ENCODE measurements at regions of chr15 and their contacts with region 1.

Region 1: GRCh38 chr15:83248151-83249029 is 36.1 kb downstream of the BNC1 start:
- DNase-seq: peak; percentile 20
- ATAC-seq: peak; percentile 85
- H3K4me3 Mint-ChIP-seq: no peak overlapping the region
- H3K27ac Mint-ChIP-seq: no peak overlapping the region
- H3K4me1 Mint-ChIP-seq: peaks cover 4% of the 10 kb centered on the region
- H3K27me3 Mint-ChIP-seq: peaks cover 16% of the 10 kb centered on the region
- CTCF ChIP-seq: peak; percentile 93

Region 2: DNA sequence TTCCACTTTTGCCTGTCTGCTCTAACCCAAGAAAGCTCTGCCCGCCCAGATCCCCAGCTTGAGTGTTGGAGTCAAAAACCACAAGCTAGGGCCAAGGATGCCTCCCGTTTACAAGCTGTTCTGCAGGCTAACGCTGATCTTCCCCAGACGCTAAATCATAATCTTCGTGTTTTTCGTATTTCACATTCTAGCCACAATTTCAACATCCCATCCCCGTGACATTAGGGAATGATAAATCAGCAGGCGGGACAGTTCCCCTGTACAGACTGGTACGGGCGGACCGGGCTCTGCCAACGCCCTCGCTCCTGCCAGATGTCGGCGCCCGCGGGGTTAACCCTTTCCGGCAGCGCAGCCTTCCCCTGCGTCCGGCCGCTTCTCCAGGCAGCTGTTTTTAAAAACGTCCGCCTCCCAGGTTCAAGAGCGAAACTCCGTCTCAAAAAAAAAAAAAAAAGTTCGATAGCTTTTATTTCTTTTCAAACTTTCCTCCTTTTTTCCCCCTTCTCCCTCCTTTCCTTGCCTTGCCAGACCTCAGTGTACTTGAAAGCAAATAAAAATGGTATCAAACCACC is 117.1 kb after region 1 on chr15:
- CTCF ChIA-PET with region 1: interaction called, 28 read pairs
- POLR2A ChIA-PET with region 1: no interaction called
- DNase-seq: peak; percentile 67
- ATAC-seq: peak; percentile 90
- H3K4me3 Mint-ChIP-seq: peak overlapping the region; percentile 75
- H3K27ac Mint-ChIP-seq: no peak overlapping the region
- H3K4me1 Mint-ChIP-seq: peaks cover 18% of the 10 kb centered on the region
- H3K27me3 Mint-ChIP-seq: peaks cover 29% of the 10 kb centered on the region
- CTCF ChIP-seq: no peak

Region 3: GRCh38 chr15:83396101-83396500 is 147.7 kb after region 1 on chr15:
- CTCF ChIA-PET with region 1: interaction called, 14 read pairs
- POLR2A ChIA-PET with region 1: no interaction called
- DNase-seq: peak; percentile 60
- ATAC-seq: peak; percentile 97
- H3K4me3 Mint-ChIP-seq: no peak overlapping the region
- H3K27ac Mint-ChIP-seq: no peak overlapping the region
- H3K4me1 Mint-ChIP-seq: peaks cover 8% of the 10 kb centered on the region
- H3K27me3 Mint-ChIP-seq: peaks cover 2% of the 10 kb centered on the region; the same call in 1 of the 2 replicates
- CTCF ChIP-seq: no peak

Region 4: GRCh38 chr15:83436458-83437158 is 188.2 kb after region 1 on chr15:
- CTCF ChIA-PET with region 1: interaction called, 219 read pairs
- POLR2A ChIA-PET with region 1: interaction called, 3 read pairs
- DNase-seq: no peak
- ATAC-seq: peak; percentile 88
- H3K4me3 Mint-ChIP-seq: no peak overlapping the region
- H3K27ac Mint-ChIP-seq: no peak overlapping the region
- H3K4me1 Mint-ChIP-seq: peaks cover 8% of the 10 kb centered on the region
- H3K27me3 Mint-ChIP-seq: no peaks in the 10 kb centered on the region
- CTCF ChIP-seq: peak; percentile 42

Region 5: GRCh38 chr15:83559310-83559966 is 311.0 kb after region 1 on chr15:
- CTCF ChIA-PET with region 1: interaction called, 20 read pairs
- POLR2A ChIA-PET with region 1: no interaction called
- DNase-seq: peak; percentile 72
- ATAC-seq: peak; percentile 90
- H3K4me3 Mint-ChIP-seq: no peak overlapping the region
- H3K27ac Mint-ChIP-seq: no peak overlapping the region
- H3K4me1 Mint-ChIP-seq: 0 out of 2 replicates have a peak, but pooled peaks cover 2% of the 10 kb centered on the region
- H3K27me3 Mint-ChIP-seq: no peaks in the 10 kb centered on the region
- CTCF ChIP-seq: peak; percentile 70

Region 6: GRCh38 chr15:83571820-83572707 is 323.7 kb after region 1 on chr15:
- CTCF ChIA-PET with region 1: interaction called, 24 read pairs
- POLR2A ChIA-PET with region 1: no interaction called
- DNase-seq: no peak
- ATAC-seq: peak; percentile 79
- H3K4me3 Mint-ChIP-seq: no peak overlapping the region
- H3K27ac Mint-ChIP-seq: no peak overlapping the region
- H3K4me1 Mint-ChIP-seq: no peaks in the 10 kb centered on the region
- H3K27me3 Mint-ChIP-seq: no peaks in the 10 kb centered on the region
- CTCF ChIP-seq: peak; percentile 34; the same call in 1 of the 2 replicates